ENCODE measurements at regions of chr5 and their contacts with region 1.

Region 1: DNA sequence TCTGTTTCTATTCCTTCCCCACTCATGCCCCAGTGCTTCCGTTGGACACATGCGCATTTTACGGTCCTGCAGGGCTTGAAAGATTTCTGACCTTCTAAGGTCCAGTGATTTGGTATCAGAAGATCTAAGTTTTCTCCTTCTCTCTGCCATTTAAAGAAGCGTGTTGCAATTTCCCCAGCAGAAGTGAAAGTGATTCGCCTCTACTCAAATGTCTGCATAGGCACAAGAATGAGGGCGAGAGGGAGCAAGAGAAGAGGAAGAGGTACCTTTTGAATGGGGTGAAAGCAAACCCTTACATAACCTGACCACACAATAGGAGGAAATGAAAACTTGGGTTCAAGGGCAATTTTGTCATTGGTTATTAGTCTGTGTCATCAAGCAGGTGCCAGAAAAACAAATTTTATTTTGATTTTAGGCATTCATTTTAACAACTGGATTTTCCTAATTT is 31.7 kb upstream of the NR3C1 start:
- DNase-seq: peak; percentile 61 to 72 (median 67)
- H3K4me3 ChIP-seq: peak overlapping the region; percentile 32 to 54
- H3K4me3 Mint-ChIP-seq: peak overlapping the region; percentile 93 to 98 (median 94)
- H3K27ac ChIP-seq: peak overlapping the region; percentile 55
- H3K27ac Mint-ChIP-seq: peak overlapping the region; percentile 92 to 100 (median 99)
- H3K4me1 ChIP-seq: peaks cover 51% of the 10 kb centered on the region
- H3K4me1 Mint-ChIP-seq: peaks cover 53 to 73% (median 65%) of the 10 kb centered on the region in 4 donors
- H3K27me3 ChIP-seq: no peaks in the 10 kb centered on the region
- H3K27me3 Mint-ChIP-seq: no peaks in the 10 kb centered on the region

Region 2: DNA sequence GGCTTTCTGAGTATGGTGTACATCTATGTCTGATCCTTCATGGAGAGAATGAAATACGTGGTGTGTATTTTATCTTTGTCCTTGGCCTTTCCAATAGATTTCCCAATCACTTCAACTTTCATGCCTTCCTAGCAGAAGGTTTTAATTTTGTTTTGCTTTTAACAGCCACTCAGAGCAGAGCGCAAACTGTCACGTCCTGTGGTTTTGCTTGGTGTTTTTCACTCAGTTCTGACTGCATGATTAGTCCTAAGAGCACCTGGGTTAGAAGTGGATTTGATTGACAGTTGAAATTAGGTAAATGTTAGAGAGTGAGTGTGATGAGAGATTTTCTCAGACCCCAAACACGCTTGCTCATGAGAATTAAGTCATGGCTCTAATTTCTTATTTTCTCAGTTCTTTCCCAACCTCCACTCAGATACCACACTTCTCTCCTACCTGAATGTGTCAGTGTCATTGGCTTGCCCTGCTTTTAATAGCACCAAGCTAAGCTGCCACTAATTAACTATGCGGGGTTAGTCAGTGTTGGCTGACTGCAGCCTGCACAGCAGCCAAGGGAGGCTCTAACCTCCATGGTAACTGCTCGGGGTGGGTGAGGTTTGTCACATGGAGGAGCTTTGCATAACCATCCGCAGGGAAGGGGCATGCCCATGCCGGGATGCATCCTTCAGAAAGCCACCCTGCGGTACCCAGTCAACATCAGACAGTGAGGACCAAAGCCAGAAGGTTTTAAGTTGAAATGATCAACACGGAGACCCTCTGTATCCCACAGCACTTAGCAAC is 205.1 kb before region 1 on chr5:
- CTCF ChIA-PET with region 1: no interaction called
- POLR2A ChIA-PET with region 1: no interaction called
- intact Hi-C with region 1: no loop called
- DNase-seq: peak; percentile 54 to 71 (median 67)
- H3K4me3 ChIP-seq: peak overlapping the region in 1 of 2 donors; percentile 31
- H3K4me3 Mint-ChIP-seq: peak overlapping the region; percentile 60 to 81 (median 79)
- H3K27ac ChIP-seq: peak overlapping the region; percentile 57
- H3K27ac Mint-ChIP-seq: peak overlapping the region; percentile 69 to 97 (median 88)
- H3K4me1 ChIP-seq: peaks cover 28% of the 10 kb centered on the region
- H3K4me1 Mint-ChIP-seq: peaks cover 18 to 37% (median 33%) of the 10 kb centered on the region in 4 donors
- H3K27me3 ChIP-seq: no peaks in the 10 kb centered on the region
- H3K27me3 Mint-ChIP-seq: no peaks in the 10 kb centered on the region

Region 3: DNA sequence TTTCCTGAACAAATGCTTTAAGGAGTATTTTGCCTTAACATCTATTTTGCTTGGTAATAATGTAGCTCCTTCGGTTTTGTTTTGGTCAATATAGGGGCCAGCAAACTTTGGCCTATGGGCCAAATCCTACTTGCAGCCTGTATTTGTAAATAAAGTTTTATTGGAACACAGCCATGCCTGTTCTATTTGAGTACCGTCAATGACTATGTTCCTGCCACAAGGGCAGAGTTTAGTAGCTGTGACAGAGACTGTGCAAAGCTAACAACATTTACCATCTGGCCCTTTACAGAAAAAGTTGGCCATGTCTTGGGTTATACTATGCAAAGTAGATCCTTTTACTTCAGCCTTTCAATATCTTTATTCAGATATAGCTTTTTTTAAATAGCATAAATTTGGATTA is 145.1 kb before region 1 on chr5:
- CTCF ChIA-PET with region 1: no interaction called
- POLR2A ChIA-PET with region 1: no interaction called
- intact Hi-C with region 1: no loop called
- DNase-seq: no peak
- H3K4me3 ChIP-seq: no peak overlapping the region
- H3K4me3 Mint-ChIP-seq: no peak overlapping the region
- H3K27ac ChIP-seq: no peak overlapping the region
- H3K27ac Mint-ChIP-seq: no peak overlapping the region
- H3K4me1 ChIP-seq: no peaks in the 10 kb centered on the region
- H3K4me1 Mint-ChIP-seq: peaks cover 2 to 18% (median 10%) of the 10 kb centered on the region in 4 donors
- H3K27me3 ChIP-seq: no peaks in the 10 kb centered on the region
- H3K27me3 Mint-ChIP-seq: no peaks in the 10 kb centered on the region

Region 4: GRCh38 chr5:143343042-143343441 is 92.2 kb before region 1 on chr5:
- CTCF ChIA-PET with region 1: no interaction called
- POLR2A ChIA-PET with region 1: no interaction called
- intact Hi-C with region 1: no loop called
- DNase-seq: no peak
- H3K4me3 ChIP-seq: no peak overlapping the region
- H3K4me3 Mint-ChIP-seq: no peak overlapping the region
- H3K27ac ChIP-seq: no peak overlapping the region
- H3K27ac Mint-ChIP-seq: peak overlapping the region in 1 of 7 donors; percentile 85
- H3K4me1 ChIP-seq: peaks cover 61% of the 10 kb centered on the region
- H3K4me1 Mint-ChIP-seq: peaks cover 45 to 56% (median 51%) of the 10 kb centered on the region in 4 donors
- H3K27me3 ChIP-seq: no peaks in the 10 kb centered on the region
- H3K27me3 Mint-ChIP-seq: no peaks in the 10 kb centered on the region

Region 5: GRCh38 chr5:143413958-143414669 is 21.1 kb before region 1 on chr5:
- CTCF ChIA-PET with region 1: interaction called, 19 read pairs
- POLR2A ChIA-PET with region 1: interaction called, 125 read pairs
- intact Hi-C with region 1: loop called (anchors 1 kb)
- DNase-seq: peak in 1 of 5 donors; percentile 44
- H3K4me3 ChIP-seq: no peak overlapping the region
- H3K4me3 Mint-ChIP-seq: peak overlapping the region; percentile 28 to 73 (median 63)
- H3K27ac ChIP-seq: peak overlapping the region; percentile 33
- H3K27ac Mint-ChIP-seq: peak overlapping the region; percentile 4 to 92 (median 72)
- H3K4me1 ChIP-seq: peaks cover 87% of the 10 kb centered on the region
- H3K4me1 Mint-ChIP-seq: peaks cover 30 to 64% (median 48%) of the 10 kb centered on the region in 4 donors
- H3K27me3 ChIP-seq: no peaks in the 10 kb centered on the region
- H3K27me3 Mint-ChIP-seq: no peaks in the 10 kb centered on the region

Region 6: GRCh38 chr5:143448518-143448917 is 13.3 kb after region 1 on chr5:
- CTCF ChIA-PET with region 1: interaction called, 5 read pairs
- POLR2A ChIA-PET with region 1: interaction called, 30 read pairs
- intact Hi-C with region 1: no loop called
- DNase-seq: peak in 4 of 5 donors; percentile 22 to 31 (median 26)
- H3K4me3 ChIP-seq: no peak overlapping the region
- H3K4me3 Mint-ChIP-seq: no peak overlapping the region
- H3K27ac ChIP-seq: no peak overlapping the region
- H3K27ac Mint-ChIP-seq: peak overlapping the region in 2 of 7 donors; percentile 56 to 57
- H3K4me1 ChIP-seq: peaks cover 11% of the 10 kb centered on the region
- H3K4me1 Mint-ChIP-seq: peaks cover 4 to 24% (median 12%) of the 10 kb centered on the region in 4 donors
- H3K27me3 ChIP-seq: no peaks in the 10 kb centered on the region
- H3K27me3 Mint-ChIP-seq: no peaks in the 10 kb centered on the region